ENCODE measurements at regions of chr6 and their contacts with region 1.

Region 1: DNA sequence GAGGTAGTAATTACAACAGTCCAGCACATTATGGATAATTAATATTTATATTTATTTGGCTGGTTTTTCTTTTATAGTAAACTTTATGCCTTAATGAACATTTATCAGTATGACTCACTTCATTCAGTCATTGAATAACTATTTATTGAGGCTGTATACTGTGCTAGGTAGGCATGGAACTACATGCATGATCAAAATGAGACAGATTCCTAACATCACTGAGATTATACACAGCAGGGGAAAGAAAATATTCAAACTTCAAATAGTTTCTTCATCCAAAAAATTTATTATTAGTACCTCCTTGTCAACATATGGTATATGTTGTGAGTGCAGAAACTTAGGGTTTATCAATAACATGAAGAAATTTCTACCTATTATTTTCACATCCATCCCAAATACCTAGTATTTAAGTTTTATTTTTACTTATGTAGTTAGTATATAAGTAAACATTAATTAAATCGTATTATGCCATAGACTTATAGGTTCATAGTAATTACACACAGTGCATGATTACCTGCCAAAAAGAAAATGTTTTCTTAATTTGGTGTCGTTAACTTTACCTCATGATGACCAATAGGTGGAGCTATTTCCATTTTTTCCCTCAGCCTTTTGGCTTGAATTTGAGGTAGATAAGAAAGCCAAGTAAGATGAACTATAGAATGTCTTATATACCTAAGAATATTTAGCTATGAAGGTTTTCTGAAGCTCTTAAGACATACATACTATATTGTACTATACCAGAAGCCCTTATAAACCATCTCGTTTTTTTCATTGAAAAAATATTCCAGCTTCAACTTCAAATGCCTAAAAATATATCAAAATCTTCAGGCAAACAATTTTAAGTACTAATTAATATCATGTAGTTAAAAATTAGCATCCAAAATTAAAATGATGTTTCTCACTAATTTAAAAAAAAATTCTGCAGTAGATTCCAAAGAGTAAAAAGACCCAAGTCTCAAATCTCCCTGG is 12.5 kb upstream of the TMEM30A start:
- DNase-seq: no peak

Region 2: DNA sequence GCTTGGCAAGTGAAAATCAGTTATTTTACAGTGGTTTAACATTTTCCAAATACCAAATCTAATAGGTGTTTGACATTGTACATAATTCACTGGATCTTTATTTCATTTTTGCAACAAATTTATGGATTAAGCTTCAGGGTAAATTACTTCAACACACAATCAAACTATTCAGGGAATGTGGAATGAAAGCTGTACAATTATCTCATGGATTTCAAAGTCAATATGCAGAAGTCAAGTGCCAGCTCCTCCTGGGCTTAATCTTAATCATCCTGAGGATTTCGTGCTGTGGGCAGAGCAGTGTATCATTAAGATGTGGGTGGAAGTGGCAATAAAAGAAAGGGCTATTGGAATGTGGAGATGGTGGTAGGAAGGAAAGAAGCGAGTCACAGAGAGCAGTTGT is 640.1 kb before region 1 on chr6:
- intact Hi-C with region 1: no loop called
- DNase-seq: no peak

Region 3: GRCh38 chr6:75070244-75070643 is 226.9 kb before region 1 on chr6:
- intact Hi-C with region 1: no loop called
- DNase-seq: no peak

Region 4: DNA sequence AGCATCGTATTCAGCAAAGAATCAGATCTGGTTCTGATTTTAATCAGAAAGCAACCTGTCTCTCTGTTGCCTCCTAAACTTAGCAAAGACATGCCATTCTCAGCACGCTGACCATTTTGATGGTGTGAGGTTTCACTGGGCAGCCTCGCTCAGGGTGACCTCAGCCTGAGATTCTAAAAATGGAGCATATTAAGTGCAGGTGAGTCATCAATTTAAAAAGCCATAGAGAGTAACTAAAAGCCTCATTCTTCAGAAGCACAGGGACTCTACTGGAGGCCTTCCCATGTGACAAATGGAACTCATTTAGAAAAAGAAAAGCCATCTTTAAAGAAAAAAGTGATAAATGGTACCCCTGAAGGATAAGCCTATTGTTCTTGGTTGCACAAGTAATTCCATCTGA is 105.2 kb after region 1 on chr6:
- intact Hi-C with region 1: no loop called
- DNase-seq: peak; percentile 77

Region 5: GRCh38 chr6:75504465-75505228 is 207.6 kb after region 1 on chr6:
- intact Hi-C with region 1: loop called (anchors 1 kb)
- DNase-seq: no peak